ENCODE measurements at regions of chr19 and their contacts with region 1.

Region 1: DNA sequence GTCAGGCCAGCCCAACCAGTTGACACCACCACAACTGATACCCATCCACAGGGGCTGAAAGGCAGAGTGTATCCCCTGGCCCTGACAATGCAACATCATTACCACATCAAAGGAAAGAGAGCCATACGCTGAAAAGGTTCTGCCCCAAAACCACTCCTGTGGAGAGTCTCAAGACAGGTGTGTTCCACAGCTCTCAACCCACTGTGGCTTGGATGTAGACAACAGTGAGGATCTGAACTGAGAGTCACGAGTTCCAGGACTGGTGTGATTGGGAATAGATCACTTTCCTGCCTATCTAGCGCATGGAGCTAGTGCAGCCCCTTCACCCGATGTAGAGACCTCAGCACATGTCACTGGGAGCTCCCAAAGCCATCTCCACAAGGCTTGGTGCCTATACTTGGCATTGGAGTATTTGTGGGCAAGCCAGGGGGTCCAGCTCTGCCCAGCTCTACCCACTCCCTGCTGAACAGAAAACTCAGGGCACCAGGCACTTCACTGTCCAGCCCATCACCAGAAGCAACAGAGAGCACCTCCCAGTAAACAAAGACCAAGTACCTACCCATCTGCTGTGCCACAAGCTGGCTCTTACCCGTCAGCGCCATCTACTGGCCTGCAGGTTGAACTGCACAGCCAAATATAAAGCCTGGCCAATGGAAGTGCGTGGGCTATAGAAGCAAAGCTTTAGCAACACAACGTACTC is 579.5 kb downstream of the UQCRFS1 start:
- DNase-seq: peak; percentile 28
- ATAC-seq: no peak
- H3K4me3 ChIP-seq: no peak overlapping the region
- H3K4me3 Mint-ChIP-seq: no peak overlapping the region
- H3K27ac ChIP-seq: no peak overlapping the region
- H3K27ac Mint-ChIP-seq: no peak overlapping the region
- H3K4me1 ChIP-seq: peaks cover 0 to 6% of the 10 kb centered on the region in 2 donors
- H3K4me1 Mint-ChIP-seq: peaks cover 2% of the 10 kb centered on the region
- H3K27me3 ChIP-seq: no peaks in the 10 kb centered on the region
- H3K27me3 Mint-ChIP-seq: no peaks in the 10 kb centered on the region
- CTCF ChIP-seq: peak; percentile 74

Region 2: GRCh38 chr19:28466107-28467045 is 167.1 kb before region 1 on chr19:
- CTCF ChIA-PET with region 1: no interaction called
- POLR2A ChIA-PET with region 1: no interaction called
- intact Hi-C with region 1: loop called (anchors 5 kb)
- DNase-seq: peak; percentile 35
- ATAC-seq: no peak
- H3K4me3 ChIP-seq: no peak overlapping the region
- H3K4me3 Mint-ChIP-seq: no peak overlapping the region
- H3K27ac ChIP-seq: no peak overlapping the region
- H3K27ac Mint-ChIP-seq: no peak overlapping the region
- H3K4me1 ChIP-seq: peaks cover 4 to 17% of the 10 kb centered on the region in 2 donors
- H3K4me1 Mint-ChIP-seq: peaks cover 4% of the 10 kb centered on the region
- H3K27me3 ChIP-seq: no peaks in the 10 kb centered on the region
- H3K27me3 Mint-ChIP-seq: no peaks in the 10 kb centered on the region
- CTCF ChIP-seq: peak; percentile 60